OCI-LY7 (cell line): ENCODE measurements at regions of chr3 and their contacts with region 1.

Region 1: DNA sequence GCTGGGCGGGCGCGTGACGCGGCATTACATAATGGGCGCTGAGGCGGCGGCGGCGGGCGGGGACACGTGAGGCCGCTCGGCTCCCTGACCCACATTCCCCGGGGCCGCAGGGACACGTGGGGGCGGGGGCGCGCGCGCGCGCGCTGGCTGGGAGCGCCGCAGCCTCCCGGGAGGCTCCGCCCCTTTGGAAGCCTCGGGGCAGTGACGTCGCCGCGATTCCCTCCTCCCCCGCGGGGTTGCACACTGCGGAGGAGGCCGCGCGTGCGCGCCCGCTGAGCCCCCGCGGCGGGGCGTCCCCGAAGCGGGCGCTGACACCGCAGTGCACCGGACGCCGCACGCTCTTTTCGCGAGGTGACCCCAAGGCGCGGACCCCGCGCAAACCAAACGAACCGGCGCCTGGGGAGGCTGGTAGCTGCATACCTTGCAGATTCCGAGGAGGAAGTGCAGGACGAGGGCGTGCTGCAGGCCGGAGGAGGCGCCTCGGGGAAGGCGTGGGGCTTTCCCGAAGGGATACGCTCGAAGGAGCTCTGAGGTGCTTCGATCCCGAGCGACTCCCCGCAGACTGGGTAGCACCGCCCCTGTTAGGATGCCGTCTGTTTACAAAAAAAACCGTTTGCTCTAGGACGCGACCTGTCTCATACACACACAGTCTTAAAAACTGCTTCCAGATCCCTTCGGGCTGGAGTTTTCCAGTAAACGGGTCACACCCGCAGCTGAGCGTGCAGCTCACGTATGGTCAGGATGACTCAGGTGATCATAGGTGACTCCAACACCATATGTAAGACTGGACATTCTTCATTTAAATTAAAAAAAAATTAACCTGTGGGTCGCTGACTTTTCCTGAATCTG is 1.0 kb downstream of the NR1D2 start:
- DNase-seq: peak; percentile 95
- H3K4me3 ChIP-seq: peak overlapping the region; percentile 72
- H3K27ac ChIP-seq: peak overlapping the region; percentile 54
- H3K4me1 ChIP-seq: peaks cover 38% of the 10 kb centered on the region
- CTCF ChIP-seq: no peak

Region 2: DNA sequence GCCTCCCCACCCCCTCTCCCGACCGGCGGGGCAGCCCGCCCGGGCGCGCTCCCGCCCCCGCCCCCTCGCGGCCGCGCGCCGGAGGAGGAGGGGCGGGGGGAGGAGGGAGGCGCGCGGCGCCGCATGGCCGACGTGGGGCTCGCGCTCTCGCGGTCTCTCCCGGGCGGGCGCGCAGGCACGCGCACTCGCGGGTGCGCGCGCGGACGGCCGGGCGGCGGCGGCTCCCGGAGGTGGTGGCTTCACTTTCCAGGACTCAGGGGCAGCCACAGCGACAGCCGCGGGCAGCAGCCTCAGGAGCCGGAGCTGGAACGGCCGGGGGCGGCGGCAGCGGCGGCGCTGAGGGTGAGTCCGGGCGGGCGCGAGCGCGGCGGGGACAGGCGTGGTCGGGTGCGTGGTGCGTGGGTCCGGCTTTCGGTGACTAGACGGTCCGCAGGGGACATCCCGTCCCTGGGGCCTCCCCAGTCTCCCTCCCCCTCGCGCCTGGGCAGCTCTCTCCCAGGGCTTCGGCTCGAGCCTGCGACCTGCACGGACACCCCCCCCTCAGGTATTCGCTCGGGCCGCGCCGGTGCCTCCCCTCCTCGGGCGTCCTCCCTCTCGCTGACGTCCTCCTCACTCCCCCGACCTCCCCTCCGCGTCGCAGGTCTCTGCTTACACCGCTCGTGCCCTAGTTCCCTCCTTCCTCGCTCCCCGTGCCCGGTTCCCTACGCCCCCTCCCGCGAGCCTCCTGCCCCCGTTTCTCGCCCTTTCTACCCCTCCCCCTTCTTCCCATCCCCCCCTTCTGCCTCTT is 743.0 kb before region 1 on chr3 and contains the start of gene UBE2E2:
- CTCF ChIA-PET with region 1: no interaction called
- POLR2A ChIA-PET with region 1: no interaction called
- intact Hi-C with region 1: loop called (anchors 5 kb)
- DNase-seq: peak; percentile 88
- H3K4me3 ChIP-seq: peak within 1 kb of the TSS; percentile 99
- H3K27ac ChIP-seq: peak within 1 kb of the TSS; percentile 33
- H3K4me1 ChIP-seq: peaks cover 29% of the 10 kb centered on the region
- CTCF ChIP-seq: no peak
- total RNA-seq, gene UBE2E2: 41.1 and 63.2 TPM in 2 replicates

Region 3: DNA sequence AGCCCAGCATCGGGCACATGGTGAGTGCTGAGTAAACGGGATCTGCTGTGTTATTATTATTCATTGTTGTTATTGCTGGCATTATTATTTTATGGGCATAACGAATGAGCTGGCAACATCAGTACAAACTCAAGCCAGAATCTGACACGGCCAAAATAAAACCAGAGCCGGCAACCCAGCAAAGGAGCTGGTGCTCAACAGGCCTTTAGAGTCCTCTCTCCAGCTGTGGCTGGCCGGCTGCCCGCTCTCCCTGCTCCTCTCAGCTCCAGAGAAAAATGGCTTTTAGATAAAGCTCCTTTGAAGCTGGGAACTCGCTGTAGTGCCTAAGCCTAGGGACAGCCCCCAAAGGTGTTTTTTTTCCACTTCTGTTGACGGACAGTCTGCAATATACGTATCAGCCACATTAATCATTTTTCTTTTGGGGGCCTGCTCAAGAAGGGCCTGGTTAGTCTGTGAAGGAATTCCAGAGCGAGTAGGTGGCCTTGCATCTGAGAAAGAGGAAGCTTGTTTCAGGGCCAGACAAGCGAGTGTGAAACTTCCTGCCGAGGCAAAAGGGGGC is 334.3 kb before region 1 on chr3:
- CTCF ChIA-PET with region 1: no interaction called
- POLR2A ChIA-PET with region 1: no interaction called
- intact Hi-C with region 1: loop called (anchors 10 kb)
- DNase-seq: peak; percentile 64
- H3K4me3 ChIP-seq: peak overlapping the region; percentile 41
- H3K27ac ChIP-seq: peak overlapping the region; percentile 5
- H3K4me1 ChIP-seq: peaks cover 46% of the 10 kb centered on the region
- CTCF ChIP-seq: no peak

Region 4: GRCh38 chr3:23648326-23648995 is 297.7 kb before region 1 on chr3:
- CTCF ChIA-PET with region 1: no interaction called
- POLR2A ChIA-PET with region 1: no interaction called
- intact Hi-C with region 1: loop called (anchors 5 kb)
- DNase-seq: no peak
- H3K4me3 ChIP-seq: no peak overlapping the region
- H3K27ac ChIP-seq: peak overlapping the region; percentile 49
- H3K4me1 ChIP-seq: peaks cover 39% of the 10 kb centered on the region
- CTCF ChIP-seq: 0 out of 2 replicates have a peak, but pooled peaks have one; percentile 23

Region 5: GRCh38 chr3:23888617-23889228 is 57.4 kb before region 1 on chr3:
- CTCF ChIA-PET with region 1: no interaction called
- POLR2A ChIA-PET with region 1: interaction called, 4 read pairs
- intact Hi-C with region 1: loop called (anchors 2 kb)
- DNase-seq: peak; percentile 48
- H3K4me3 ChIP-seq: no peak overlapping the region
- H3K27ac ChIP-seq: no peak overlapping the region
- H3K4me1 ChIP-seq: peaks cover 11% of the 10 kb centered on the region
- CTCF ChIP-seq: peak; percentile 98

Region 6: DNA sequence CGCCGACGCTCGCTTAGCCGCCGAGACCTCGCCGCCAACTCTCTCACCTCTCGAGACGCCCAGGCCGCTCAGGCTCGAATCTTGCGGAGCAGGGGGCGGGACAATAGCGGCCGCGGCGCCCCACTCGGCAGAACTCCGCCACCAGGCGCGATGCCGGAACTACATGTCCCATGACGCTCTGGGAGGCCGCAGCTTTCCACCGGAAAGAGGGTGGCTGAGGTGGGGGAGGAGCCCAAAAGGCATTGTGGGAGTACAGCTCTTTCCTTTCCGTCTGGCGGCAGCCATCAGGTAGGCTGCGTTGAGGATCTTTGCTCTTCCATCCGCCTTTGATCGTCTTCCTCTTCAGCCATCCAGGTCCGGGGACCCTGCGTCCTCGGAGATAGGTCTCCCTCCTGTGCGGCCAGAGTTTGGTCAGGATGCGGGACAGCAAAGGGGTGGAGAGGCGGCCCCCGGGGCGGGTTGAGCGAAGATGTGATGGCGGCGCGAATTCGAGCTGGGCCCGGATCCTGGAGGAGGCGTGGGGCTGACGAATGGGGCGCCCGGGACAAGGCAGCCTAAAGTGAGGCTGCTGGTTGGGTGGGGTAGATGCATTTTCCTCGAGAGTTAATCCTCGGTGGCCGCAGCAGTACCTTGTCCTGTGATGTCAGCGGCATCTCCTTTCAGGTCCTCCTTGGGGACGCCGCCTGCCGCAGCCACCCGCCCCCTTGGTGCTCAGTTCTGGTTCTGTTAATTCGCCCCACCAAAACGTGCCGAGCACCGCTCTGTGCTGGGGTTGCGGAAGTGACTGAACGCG is 29.0 kb before region 1 on chr3 and contains the starts of genes NKIRAS1 and RPL15:
- CTCF ChIA-PET with region 1: no interaction called
- POLR2A ChIA-PET with region 1: interaction called, 10 read pairs
- intact Hi-C with region 1: loop called (anchors 1 kb)
- DNase-seq: peak; percentile 98
- H3K4me3 ChIP-seq: peak within 1 kb of the TSS; percentile 97
- H3K27ac ChIP-seq: peak within 1 kb of the TSS; percentile 64
- H3K4me1 ChIP-seq: peaks cover 45% of the 10 kb centered on the region
- CTCF ChIP-seq: no peak
- total RNA-seq, gene NKIRAS1: 4.0 and 4.1 TPM in 2 replicates
- total RNA-seq, gene RPL15: 2,205 and 2,390 TPM in 2 replicates

Region 7: GRCh38 chr3:23959135-23959900 is 13.2 kb after region 1 on chr3:
- CTCF ChIA-PET with region 1: no interaction called
- POLR2A ChIA-PET with region 1: interaction called, 10 read pairs
- intact Hi-C with region 1: no loop called
- DNase-seq: no peak
- H3K4me3 ChIP-seq: no peak overlapping the region
- H3K27ac ChIP-seq: no peak overlapping the region
- H3K4me1 ChIP-seq: no peaks in the 10 kb centered on the region
- CTCF ChIP-seq: no peak